ENCODE measurements at regions of chr3 and their contacts with region 1.

Region 1: GRCh38 chr3:194134757-194135528 is 1.0 kb upstream of the HES1 start:
- DNase-seq: peak; percentile 84 to 91
- ATAC-seq: peak; percentile 51 to 60
- H3K4me3 ChIP-seq: peak overlapping the region; percentile 65 to 86 (median 75)
- H3K27ac ChIP-seq: peak overlapping the region; percentile 97 to 100 (median 99)
- H3K4me1 ChIP-seq: peaks cover 24 to 38% of the 10 kb centered on the region in 2 donors
- H3K27me3 ChIP-seq: no peaks in the 10 kb centered on the region
- CTCF ChIP-seq: no peak
- POLR2A ChIP-seq: peak; percentile 89 to 95

Region 2: DNA sequence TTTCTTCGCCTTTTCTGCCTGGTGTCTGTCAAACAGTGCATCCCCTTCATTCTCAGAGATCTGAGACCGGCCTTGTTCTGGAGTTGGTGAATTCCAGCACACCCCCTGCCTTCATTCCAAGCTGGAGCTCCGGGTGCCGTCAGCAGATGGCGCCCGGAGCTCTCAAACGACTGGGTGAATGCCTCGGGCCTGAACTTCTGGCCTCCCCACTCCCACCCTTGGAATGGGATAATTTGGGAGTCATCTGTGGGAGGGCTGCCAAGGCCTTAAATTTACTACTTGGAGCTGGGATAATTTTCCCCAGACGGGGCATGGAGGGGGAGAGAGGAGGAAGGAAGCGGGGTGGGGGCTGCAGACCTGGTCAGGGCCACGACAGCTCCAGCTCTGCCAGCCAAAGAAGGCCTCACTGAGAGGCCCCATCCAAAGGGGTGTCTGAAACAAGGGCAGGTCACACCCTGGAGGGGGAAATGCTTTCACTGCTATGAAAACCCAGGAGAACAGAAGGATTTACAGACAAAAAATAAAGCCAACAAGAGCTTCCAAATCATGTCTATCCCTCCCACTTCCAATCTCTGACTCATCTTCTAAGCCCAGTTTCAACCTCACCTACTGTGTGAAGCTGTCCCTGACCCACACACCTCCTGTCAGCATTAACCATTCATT is 354.0 kb before region 1 on chr3:
- in situ Hi-C with region 1: loop called in 3 of 4 experiments (anchors 5 to 10 kb)
- intact Hi-C with region 1: loop called (anchors 2 kb)
- DNase-seq: peak; percentile 32 to 46
- ATAC-seq: peak; percentile 80 to 87
- H3K4me3 ChIP-seq: no peak overlapping the region
- H3K27ac ChIP-seq: no peak overlapping the region
- H3K4me1 ChIP-seq: peaks cover 5 to 7% of the 10 kb centered on the region in 2 donors
- H3K27me3 ChIP-seq: peaks cover 0 to 19% (median 13%) of the 10 kb centered on the region in 3 donors
- CTCF ChIP-seq: peak; percentile 65 to 89 (median 77)
- POLR2A ChIP-seq: no peak

Region 3: GRCh38 chr3:193872265-193872753 is 262.6 kb before region 1 on chr3:
- in situ Hi-C with region 1: no loop called
- intact Hi-C with region 1: loop called (anchors 10 kb)
- DNase-seq: peak; percentile 85 to 88
- ATAC-seq: peak; percentile 96 to 97
- H3K4me3 ChIP-seq: no peak overlapping the region
- H3K27ac ChIP-seq: peak overlapping the region in 3 of 4 donors; percentile 27 to 71 (median 43)
- H3K4me1 ChIP-seq: peaks cover 0 to 18% of the 10 kb centered on the region in 2 donors
- H3K27me3 ChIP-seq: no peaks in the 10 kb centered on the region
- CTCF ChIP-seq: no peak
- POLR2A ChIP-seq: no peak

Region 4: GRCh38 chr3:193997228-193998122 is 137.5 kb before region 1 on chr3:
- in situ Hi-C with region 1: loop called in 2 of 4 experiments (anchors 5 to 25 kb)
- intact Hi-C with region 1: loop called (anchors 1 kb)
- DNase-seq: peak; percentile 65 to 84
- ATAC-seq: peak; percentile 87
- H3K4me3 ChIP-seq: no peak overlapping the region
- H3K27ac ChIP-seq: peak overlapping the region; percentile 85 to 90 (median 86)
- H3K4me1 ChIP-seq: peaks cover 39 to 46% of the 10 kb centered on the region in 2 donors
- H3K27me3 ChIP-seq: no peaks in the 10 kb centered on the region
- CTCF ChIP-seq: no peak
- POLR2A ChIP-seq: no peak

Region 5: DNA sequence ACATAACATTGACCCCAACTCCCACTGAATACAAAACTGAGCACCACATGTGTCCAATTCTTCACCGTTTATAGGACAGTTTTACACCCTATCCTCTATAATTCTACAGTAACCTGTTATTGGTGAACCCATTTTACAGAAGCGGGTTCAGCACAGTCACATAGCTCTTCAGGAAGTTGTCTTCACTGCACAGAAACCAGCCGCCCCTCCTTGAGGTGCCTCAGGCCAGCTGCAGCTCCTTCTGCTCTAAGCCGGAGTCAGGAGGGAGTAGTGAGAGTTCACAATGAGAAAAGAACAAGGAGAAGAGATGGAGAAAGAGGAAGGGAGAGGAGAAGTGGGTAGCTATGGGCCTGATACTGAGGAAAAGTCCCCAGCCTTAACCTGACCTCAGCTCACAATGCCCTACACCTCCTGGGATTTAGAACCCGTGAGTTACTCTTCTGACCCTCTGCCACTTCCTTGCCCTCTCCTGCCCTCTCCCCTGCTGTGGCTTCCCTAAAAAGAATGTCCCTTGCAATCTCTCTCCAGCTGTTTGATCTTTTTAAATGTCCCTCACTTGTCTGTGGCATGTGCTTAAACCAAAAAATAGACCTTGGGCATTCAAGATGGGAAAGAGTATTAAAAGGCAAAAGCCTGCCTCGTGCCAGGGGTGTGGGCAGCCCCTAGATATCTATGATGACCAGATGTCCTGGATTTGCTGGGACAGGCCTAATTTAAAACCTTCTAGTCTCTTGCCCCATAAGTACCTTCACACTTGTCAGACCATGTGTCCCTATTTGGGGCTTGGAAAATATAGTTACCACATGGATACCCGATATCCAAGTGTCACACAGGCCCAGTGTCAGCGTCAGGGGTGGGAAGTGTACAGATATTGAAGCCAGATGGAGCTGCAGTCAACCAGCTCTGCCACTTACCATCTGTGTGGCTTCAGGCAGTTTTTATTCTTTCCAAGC is 70.3 kb before region 1 on chr3:
- in situ Hi-C with region 1: loop called in 1 of 4 experiments (anchors 5 kb)
- intact Hi-C with region 1: loop called (anchors 1 kb)
- DNase-seq: peak; percentile 62 to 84
- ATAC-seq: peak; percentile 94 to 97
- H3K4me3 ChIP-seq: no peak overlapping the region
- H3K27ac ChIP-seq: peak overlapping the region; percentile 77 to 84 (median 79)
- H3K4me1 ChIP-seq: peaks cover 19 to 26% of the 10 kb centered on the region in 2 donors
- H3K27me3 ChIP-seq: no peaks in the 10 kb centered on the region
- CTCF ChIP-seq: peak in 3 of 5 experiments; percentile 27 to 42 (median 29)
- POLR2A ChIP-seq: no peak

Region 6: GRCh38 chr3:194265483-194265892 is 130.5 kb after region 1 on chr3:
- in situ Hi-C with region 1: loop called in 2 of 4 experiments (anchors 10 kb)
- intact Hi-C with region 1: loop called (anchors 2 kb)
- DNase-seq: peak; percentile 93 to 96
- ATAC-seq: peak; percentile 96 to 97
- H3K4me3 ChIP-seq: no peak overlapping the region
- H3K27ac ChIP-seq: peak overlapping the region; percentile 61 to 71 (median 68)
- H3K4me1 ChIP-seq: peaks cover 23 to 36% of the 10 kb centered on the region in 2 donors
- H3K27me3 ChIP-seq: no peaks in the 10 kb centered on the region
- CTCF ChIP-seq: no peak
- POLR2A ChIP-seq: no peak

Region 7: GRCh38 chr3:194486540-194487288 is 351.8 kb after region 1 on chr3 and contains the start of gene ATP13A3:
- in situ Hi-C with region 1: no loop called
- intact Hi-C with region 1: loop called (anchors 10 kb)
- DNase-seq: peak; percentile 79 to 84
- ATAC-seq: peak; percentile 90 to 93
- H3K4me3 ChIP-seq: peak within 1 kb of the TSS; percentile 61 to 73 (median 66)
- H3K27ac ChIP-seq: peak within 1 kb of the TSS; percentile 77 to 87 (median 85)
- H3K4me1 ChIP-seq: peaks cover 14 to 16% of the 10 kb centered on the region in 2 donors
- H3K27me3 ChIP-seq: no peaks in the 10 kb centered on the region
- CTCF ChIP-seq: no peak
- POLR2A ChIP-seq: peak; percentile 86 to 89
- total RNA-seq, gene ATP13A3: 31.8 to 90.2 (median 57.3) TPM

Region 8: DNA sequence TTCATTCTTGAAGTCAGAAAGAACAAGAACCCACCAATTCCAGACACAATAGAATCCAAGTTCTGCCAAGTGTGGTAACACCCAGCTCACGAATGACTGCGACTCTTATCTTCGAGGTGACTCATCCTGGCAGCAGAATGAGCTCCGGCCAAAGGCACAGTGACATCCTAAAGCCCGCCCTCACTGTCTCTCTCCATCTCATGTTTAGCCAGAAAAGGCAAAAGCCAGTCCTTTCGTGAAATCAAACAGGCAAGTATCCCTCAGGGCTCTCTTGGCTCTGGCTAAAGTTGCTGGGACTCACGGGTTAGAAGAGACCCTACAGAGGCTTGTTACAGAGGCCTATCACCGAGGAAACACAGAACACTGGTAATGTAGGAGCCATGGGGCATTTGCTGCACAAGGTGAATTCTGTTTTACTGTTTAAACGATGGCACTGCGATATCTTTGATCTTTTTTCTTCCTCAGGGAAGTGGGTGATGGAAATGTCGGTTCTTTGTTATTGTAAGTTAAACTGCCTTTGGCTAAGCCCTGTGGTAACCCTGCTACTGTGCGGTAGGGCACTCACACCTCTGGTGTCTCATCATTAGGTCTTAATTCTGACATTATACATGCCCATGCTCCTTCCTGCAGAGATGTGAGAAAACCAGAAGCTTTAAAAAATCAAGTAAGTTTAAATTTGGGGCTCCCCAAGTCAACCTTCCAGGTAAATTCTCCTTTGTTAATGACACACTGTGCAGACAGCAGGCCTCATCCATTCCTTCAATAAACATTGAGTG is 706.3 kb after region 1 on chr3:
- in situ Hi-C with region 1: no loop called
- intact Hi-C with region 1: no loop called
- DNase-seq: no peak
- ATAC-seq: no peak
- H3K4me3 ChIP-seq: no peak overlapping the region
- H3K27ac ChIP-seq: no peak overlapping the region
- H3K4me1 ChIP-seq: no peaks in the 10 kb centered on the region
- H3K27me3 ChIP-seq: no peaks in the 10 kb centered on the region
- CTCF ChIP-seq: no peak
- POLR2A ChIP-seq: no peak